Natural killer cell (primary cell): ENCODE measurements at regions of chr14 and their contacts with region 1.

Region 1: GRCh38 chr14:56579345-56580220 is at the start of gene TMEM260:
- DNase-seq: peak; percentile 88 to 96
- ATAC-seq: peak; percentile 91 to 96 (median 92)
- H3K4me3 ChIP-seq: peak within 1 kb of the TSS; percentile 94
- H3K4me3 Mint-ChIP-seq: peak within 1 kb of the TSS; percentile 92
- H3K27ac ChIP-seq: peak within 1 kb of the TSS; percentile 76
- H3K27ac Mint-ChIP-seq: peak within 1 kb of the TSS; percentile 82 to 92
- H3K4me1 ChIP-seq: peaks cover 6% of the 10 kb centered on the region
- H3K4me1 Mint-ChIP-seq: peaks cover 36 to 39% of the 10 kb centered on the region in 2 donors
- H3K27me3 ChIP-seq: no peaks in the 10 kb centered on the region
- H3K27me3 Mint-ChIP-seq: no peaks in the 10 kb centered on the region
- CTCF ChIP-seq: peak; percentile 96
- total RNA-seq, gene TMEM260: 16.7 to 21.3 (median 20.5) TPM

Region 2: DNA sequence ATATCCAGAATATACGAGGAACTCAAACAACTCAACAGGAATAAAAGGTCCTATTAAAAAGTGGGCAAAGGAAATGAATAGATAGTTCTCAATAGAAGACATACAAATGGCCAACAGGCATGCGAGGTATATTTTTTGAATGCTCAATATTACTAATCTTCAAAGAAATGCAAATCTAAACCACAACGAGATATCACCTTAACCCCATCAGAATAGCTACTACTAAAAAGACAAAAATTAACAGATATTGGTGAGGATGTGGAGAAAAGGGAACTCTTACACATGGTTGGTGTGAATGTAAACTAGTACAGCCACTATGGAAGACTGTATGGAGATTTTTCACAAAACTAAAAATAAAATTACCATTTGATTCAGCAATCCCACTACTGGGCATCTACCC is 99.3 kb after region 1 on chr14:
- intact Hi-C with region 1: no loop called
- DNase-seq: no peak
- ATAC-seq: no peak
- H3K4me3 ChIP-seq: no peak overlapping the region
- H3K4me3 Mint-ChIP-seq: no peak overlapping the region
- H3K27ac ChIP-seq: no peak overlapping the region
- H3K27ac Mint-ChIP-seq: no peak overlapping the region
- H3K4me1 ChIP-seq: no peaks in the 10 kb centered on the region
- H3K4me1 Mint-ChIP-seq: no peaks in the 10 kb centered on the region
- H3K27me3 ChIP-seq: no peaks in the 10 kb centered on the region
- H3K27me3 Mint-ChIP-seq: no peaks in the 10 kb centered on the region
- CTCF ChIP-seq: no peak

Region 3: GRCh38 chr14:57346741-57347140 is 767.2 kb after region 1 on chr14:
- intact Hi-C with region 1: no loop called
- DNase-seq: no peak
- ATAC-seq: no peak
- H3K4me3 ChIP-seq: no peak overlapping the region
- H3K4me3 Mint-ChIP-seq: no peak overlapping the region
- H3K27ac ChIP-seq: no peak overlapping the region
- H3K27ac Mint-ChIP-seq: no peak overlapping the region
- H3K4me1 ChIP-seq: no peaks in the 10 kb centered on the region
- H3K4me1 Mint-ChIP-seq: no peaks in the 10 kb centered on the region
- H3K27me3 ChIP-seq: peaks cover 5% of the 10 kb centered on the region
- H3K27me3 Mint-ChIP-seq: peaks cover 11 to 23% of the 10 kb centered on the region in 2 donors
- CTCF ChIP-seq: no peak

Region 4: GRCh38 chr14:57390028-57390805 is 810.6 kb after region 1 on chr14 and contains the start of gene NAA30:
- intact Hi-C with region 1: loop called (anchors 1 kb)
- DNase-seq: peak; percentile 87 to 96
- ATAC-seq: peak; percentile 87 to 97 (median 87)
- H3K4me3 ChIP-seq: peak within 1 kb of the TSS; percentile 60
- H3K4me3 Mint-ChIP-seq: peak within 1 kb of the TSS; percentile 94
- H3K27ac ChIP-seq: peak within 1 kb of the TSS; percentile 75
- H3K27ac Mint-ChIP-seq: peak within 1 kb of the TSS; percentile 90 to 98
- H3K4me1 ChIP-seq: peaks cover 23% of the 10 kb centered on the region
- H3K4me1 Mint-ChIP-seq: peaks cover 43 to 50% of the 10 kb centered on the region in 2 donors
- H3K27me3 ChIP-seq: no peaks in the 10 kb centered on the region
- H3K27me3 Mint-ChIP-seq: peaks cover 0 to 3% of the 10 kb centered on the region in 2 donors
- CTCF ChIP-seq: no peak
- total RNA-seq, gene NAA30: 17.1 to 32.6 (median 24.0) TPM